Activated naive CD8-positive, alpha-beta T cell treated with anti-CD3 and anti-CD28 coated beads, Interleukin-2, amount 10 ng/mL, durations not matched to agents 7 days and 5 days (primary cell): ENCODE measurements at regions of chr9 and their contacts with region 1.

Region 1: GRCh38 chr9:89701221-89701798 is 96.5 kb downstream of the GADD45G start:
- DNase-seq: peak; percentile 68
- ATAC-seq: peak; percentile 84
- H3K4me3 Mint-ChIP-seq: peak overlapping the region; percentile 90
- H3K27ac Mint-ChIP-seq: peak overlapping the region; percentile 90
- H3K4me1 Mint-ChIP-seq: peaks cover 60% of the 10 kb centered on the region
- H3K27me3 Mint-ChIP-seq: no peaks in the 10 kb centered on the region

Region 2: GRCh38 chr9:89690334-89690912 is 10.9 kb before region 1 on chr9:
- POLR2A ChIA-PET with region 1: interaction called, 19 read pairs
- DNase-seq: no peak
- ATAC-seq: peak; percentile 85
- H3K4me3 Mint-ChIP-seq: peak overlapping the region; percentile 2
- H3K27ac Mint-ChIP-seq: peak overlapping the region; percentile 64
- H3K4me1 Mint-ChIP-seq: peaks cover 34% of the 10 kb centered on the region
- H3K27me3 Mint-ChIP-seq: no peaks in the 10 kb centered on the region

Region 3: DNA sequence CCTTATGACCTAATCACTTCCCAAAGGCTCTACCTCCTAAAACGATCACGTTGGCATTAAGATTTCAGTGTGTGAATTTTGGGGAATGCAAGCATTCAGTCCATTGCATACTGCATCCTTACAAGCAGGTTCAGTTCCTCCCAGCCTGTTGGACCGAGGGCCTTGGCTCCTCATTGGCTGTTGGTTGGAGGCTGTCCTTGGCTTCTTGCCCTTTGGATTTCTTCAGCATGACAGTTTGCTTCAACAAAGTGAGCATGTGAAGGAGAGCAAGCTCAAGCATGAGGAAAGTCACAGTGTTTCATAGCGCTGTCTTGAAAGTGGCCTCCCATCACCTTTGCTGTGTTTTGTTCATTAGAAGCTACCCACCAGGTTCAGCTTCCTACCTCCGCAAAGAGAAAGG is 13.0 kb after region 1 on chr9:
- POLR2A ChIA-PET with region 1: interaction called, 29 read pairs
- DNase-seq: no peak
- ATAC-seq: no peak
- H3K4me3 Mint-ChIP-seq: peak overlapping the region; percentile 3
- H3K27ac Mint-ChIP-seq: peak overlapping the region; percentile 86
- H3K4me1 Mint-ChIP-seq: peaks cover 57% of the 10 kb centered on the region
- H3K27me3 Mint-ChIP-seq: no peaks in the 10 kb centered on the region